ENCODE measurements at regions of chr16 and their contacts with region 1.

Region 1: DNA sequence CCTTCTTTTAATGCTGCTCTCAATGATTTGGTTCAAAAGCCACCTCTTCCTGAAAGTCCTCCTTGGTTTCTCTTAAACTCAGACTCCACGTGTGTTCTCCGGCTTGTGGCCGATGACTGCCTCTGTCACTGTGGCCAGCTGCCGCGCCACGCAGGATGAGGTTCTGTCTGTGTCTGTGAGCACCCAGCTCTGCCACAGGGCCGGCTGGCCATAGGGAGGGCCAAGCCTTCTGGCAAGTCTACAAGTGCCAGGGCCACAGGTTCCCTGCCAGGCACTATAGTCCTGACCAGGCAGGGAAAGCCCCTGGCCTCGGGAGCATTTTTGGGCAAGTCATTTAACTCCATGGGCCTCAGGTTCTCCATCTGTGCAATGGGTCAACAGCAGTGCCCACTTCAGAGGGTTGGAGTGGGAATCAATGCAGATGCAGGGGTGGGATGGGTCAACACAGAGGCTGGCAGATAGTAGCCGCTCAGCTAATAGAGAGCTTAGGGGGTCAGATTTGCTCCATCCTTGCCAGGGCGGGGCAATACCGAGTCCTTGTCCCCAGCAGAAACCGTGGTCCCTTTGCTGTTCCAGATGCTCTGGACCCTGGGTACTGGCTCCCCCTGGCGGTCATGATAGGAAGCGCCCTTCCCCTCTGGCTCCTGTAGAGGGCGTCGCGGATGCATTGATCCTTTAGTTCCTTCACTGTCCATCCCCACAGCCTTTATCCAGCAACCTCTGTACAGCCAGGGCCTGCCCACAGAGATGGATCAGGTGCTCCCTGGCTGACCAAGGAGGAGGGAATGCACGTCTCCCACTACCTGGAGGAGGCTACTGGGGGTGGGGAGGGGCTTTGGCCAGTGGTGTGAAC is 19.3 kb upstream of the ADGRG3 start:
- DNase-seq: peak; percentile 79
- H3K4me3 ChIP-seq: no peak overlapping the region
- H3K27ac ChIP-seq: no peak overlapping the region
- H3K4me1 ChIP-seq: no peaks in the 10 kb centered on the region
- H3K27me3 ChIP-seq: peaks cover 0 to 10% (median 0%) of the 10 kb centered on the region in 3 donors
- CTCF ChIP-seq: peak; percentile 60 to 98 (median 93)
- EP300 ChIP-seq: no peak
- POLR2A ChIP-seq: no peak

Region 2: DNA sequence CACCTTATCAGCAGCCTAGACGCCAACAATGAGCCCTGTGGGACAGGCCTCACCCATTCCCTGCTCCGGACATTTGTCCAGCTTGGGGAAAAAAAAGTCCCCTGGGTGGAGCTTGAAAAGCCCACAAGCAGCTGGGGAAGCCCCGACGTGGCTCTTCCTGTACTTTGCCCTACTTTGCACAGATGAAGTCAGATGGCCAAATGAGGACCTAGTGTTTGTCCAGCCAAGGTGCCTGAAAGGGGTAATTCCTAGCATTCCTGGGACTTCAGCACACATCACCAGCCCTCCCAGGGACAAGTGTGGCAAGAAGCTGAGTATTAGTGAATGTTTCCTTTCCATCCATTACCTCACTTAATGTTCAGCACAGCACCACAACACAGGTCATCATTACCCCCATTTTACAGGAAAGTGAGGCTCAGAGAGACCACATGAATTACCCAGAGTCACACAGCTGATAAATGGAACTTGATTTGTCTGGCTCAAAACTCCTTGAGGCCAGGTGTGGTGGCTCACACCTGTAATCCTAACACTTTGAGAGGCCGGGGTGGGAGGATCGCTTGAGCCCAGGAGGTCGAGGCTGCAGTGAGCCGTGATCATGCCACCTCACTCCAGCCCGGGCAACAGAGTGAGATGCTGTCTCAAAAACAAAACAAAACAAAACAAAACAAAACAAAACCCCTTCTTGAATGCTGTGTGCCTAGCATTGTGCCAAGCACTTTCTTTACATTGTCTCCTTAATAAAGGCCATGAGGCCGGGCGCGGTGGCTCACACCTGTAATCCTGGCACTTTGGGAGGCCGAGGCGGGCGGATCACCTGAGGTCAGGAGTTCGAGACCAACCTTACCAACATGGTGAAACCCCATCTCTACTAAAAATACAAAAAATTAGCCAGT is 344.4 kb before region 1 on chr16:
- intact Hi-C with region 1: no loop called
- DNase-seq: peak; percentile 70
- H3K4me3 ChIP-seq: no peak overlapping the region
- H3K27ac ChIP-seq: peak overlapping the region; percentile 46 to 88 (median 65)
- H3K4me1 ChIP-seq: peaks cover 0 to 27% (median 21%) of the 10 kb centered on the region in 4 donors
- H3K27me3 ChIP-seq: no peaks in the 10 kb centered on the region
- CTCF ChIP-seq: no peak
- EP300 ChIP-seq: no peak
- POLR2A ChIP-seq: no peak

Region 3: GRCh38 chr16:57576429-57576870 is 72.4 kb before region 1 on chr16:
- intact Hi-C with region 1: loop called (anchors 5 kb)
- DNase-seq: peak; percentile 78
- H3K4me3 ChIP-seq: no peak overlapping the region
- H3K27ac ChIP-seq: no peak overlapping the region
- H3K4me1 ChIP-seq: peaks cover 0 to 4% (median 0%) of the 10 kb centered on the region in 4 donors
- H3K27me3 ChIP-seq: peaks cover 3 to 21% (median 5%) of the 10 kb centered on the region in 3 donors
- CTCF ChIP-seq: peak; percentile 64 to 93 (median 84)
- EP300 ChIP-seq: no peak
- POLR2A ChIP-seq: no peak

Region 4: DNA sequence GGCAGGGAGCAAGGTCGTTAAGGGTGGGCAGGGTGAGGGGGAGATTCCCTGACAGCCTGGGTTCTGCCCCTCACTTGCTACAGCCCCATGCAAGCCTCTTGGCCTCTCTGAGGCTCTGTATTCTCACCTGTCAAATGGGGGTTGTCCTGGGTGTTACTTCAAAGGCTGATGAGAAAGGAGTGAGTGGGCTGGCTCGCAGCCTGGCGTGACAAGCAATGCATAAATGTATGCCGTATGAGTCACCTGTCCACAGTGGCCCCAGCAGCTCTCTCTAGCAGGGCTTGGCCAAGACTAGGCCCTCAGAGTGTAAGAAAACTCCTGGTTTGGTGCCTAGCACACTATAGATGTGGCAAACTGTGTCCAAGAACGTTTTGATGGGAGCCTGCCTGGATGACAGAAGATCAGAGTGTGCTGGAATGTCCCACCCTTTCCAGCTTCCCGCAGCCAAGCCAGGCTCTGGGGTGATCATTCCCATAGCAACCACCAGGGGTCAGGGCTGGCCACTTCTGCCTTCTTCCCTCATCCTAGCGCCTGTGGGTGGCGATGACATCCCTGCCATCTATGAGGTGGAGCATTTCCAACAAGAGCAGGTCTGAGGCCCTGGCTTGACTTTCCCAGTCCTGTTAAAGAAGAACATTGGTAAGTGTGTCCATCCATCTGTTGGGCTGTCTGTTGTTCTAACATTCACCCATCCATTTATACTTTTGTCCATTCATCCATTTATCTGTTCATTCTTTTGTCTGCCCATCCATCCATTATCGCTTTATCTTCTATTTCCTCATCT is 57.5 kb before region 1 on chr16:
- intact Hi-C with region 1: loop called (anchors 2 kb)
- DNase-seq: peak; percentile 75
- H3K4me3 ChIP-seq: no peak overlapping the region
- H3K27ac ChIP-seq: no peak overlapping the region
- H3K4me1 ChIP-seq: peaks cover 0 to 8% (median 3%) of the 10 kb centered on the region in 4 donors
- H3K27me3 ChIP-seq: peaks cover 0 to 9% (median 9%) of the 10 kb centered on the region in 3 donors
- CTCF ChIP-seq: peak; percentile 18 to 76 (median 68)
- EP300 ChIP-seq: no peak
- POLR2A ChIP-seq: no peak

Region 5: GRCh38 chr16:57925310-57925709 is 276.5 kb after region 1 on chr16:
- intact Hi-C with region 1: no loop called
- DNase-seq: no peak
- H3K4me3 ChIP-seq: no peak overlapping the region
- H3K27ac ChIP-seq: no peak overlapping the region
- H3K4me1 ChIP-seq: no peaks in the 10 kb centered on the region
- H3K27me3 ChIP-seq: no peaks in the 10 kb centered on the region
- CTCF ChIP-seq: no peak
- EP300 ChIP-seq: no peak
- POLR2A ChIP-seq: no peak

Measured in sigmoid colon (tissue), 7 donors.